Activated CD4-positive, alpha-beta T cell treated with anti-CD3 and anti-CD28 coated beads, Interleukin-2, amount 10 ng/mL, durations not matched to agents 24 days and 14 days (primary cell): ENCODE measurements at regions of chr6 and their contacts with region 1.

Region 1: GRCh38 chr6:139323511-139324300 is 31.9 kb upstream of the TXLNB start:
- DNase-seq: peak; percentile 92
- H3K4me3 Mint-ChIP-seq: peak overlapping the region; percentile 83
- H3K27ac Mint-ChIP-seq: peak overlapping the region; percentile 99
- H3K4me1 Mint-ChIP-seq: peaks cover 21% of the 10 kb centered on the region
- H3K27me3 Mint-ChIP-seq: no peaks in the 10 kb centered on the region

Region 2: GRCh38 chr6:137518386-137518983 is 1805.2 kb before region 1 on chr6:
- intact Hi-C with region 1: no loop called
- DNase-seq: peak; percentile 42
- H3K4me3 Mint-ChIP-seq: no peak overlapping the region
- H3K27ac Mint-ChIP-seq: no peak overlapping the region
- H3K4me1 Mint-ChIP-seq: peaks cover 2% of the 10 kb centered on the region
- H3K27me3 Mint-ChIP-seq: peaks cover 74% of the 10 kb centered on the region

Region 3: DNA sequence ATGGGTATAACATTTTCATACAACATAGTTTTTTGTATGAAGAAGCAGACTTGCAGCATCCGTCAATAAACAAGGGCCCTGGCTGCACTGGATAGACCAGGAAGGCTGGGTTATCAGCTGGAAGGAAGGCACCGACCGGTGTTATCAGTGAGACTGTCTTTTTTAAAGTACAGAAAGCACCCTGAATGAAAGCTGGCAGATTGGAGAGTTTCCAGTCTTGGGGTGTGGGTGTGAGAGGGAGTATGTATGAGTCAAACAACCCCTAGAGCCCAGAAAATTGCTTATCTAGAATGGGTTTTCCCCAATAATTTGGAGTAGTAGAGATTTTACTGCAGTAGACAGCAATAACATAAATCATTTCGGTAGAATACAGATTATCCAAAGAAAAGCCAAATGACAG is 74.3 kb before region 1 on chr6:
- intact Hi-C with region 1: loop called (anchors 1 kb)
- DNase-seq: peak; percentile 70
- H3K4me3 Mint-ChIP-seq: peak overlapping the region; percentile 52
- H3K27ac Mint-ChIP-seq: peak overlapping the region; percentile 91
- H3K4me1 Mint-ChIP-seq: peaks cover 46% of the 10 kb centered on the region
- H3K27me3 Mint-ChIP-seq: no peaks in the 10 kb centered on the region

Region 4: DNA sequence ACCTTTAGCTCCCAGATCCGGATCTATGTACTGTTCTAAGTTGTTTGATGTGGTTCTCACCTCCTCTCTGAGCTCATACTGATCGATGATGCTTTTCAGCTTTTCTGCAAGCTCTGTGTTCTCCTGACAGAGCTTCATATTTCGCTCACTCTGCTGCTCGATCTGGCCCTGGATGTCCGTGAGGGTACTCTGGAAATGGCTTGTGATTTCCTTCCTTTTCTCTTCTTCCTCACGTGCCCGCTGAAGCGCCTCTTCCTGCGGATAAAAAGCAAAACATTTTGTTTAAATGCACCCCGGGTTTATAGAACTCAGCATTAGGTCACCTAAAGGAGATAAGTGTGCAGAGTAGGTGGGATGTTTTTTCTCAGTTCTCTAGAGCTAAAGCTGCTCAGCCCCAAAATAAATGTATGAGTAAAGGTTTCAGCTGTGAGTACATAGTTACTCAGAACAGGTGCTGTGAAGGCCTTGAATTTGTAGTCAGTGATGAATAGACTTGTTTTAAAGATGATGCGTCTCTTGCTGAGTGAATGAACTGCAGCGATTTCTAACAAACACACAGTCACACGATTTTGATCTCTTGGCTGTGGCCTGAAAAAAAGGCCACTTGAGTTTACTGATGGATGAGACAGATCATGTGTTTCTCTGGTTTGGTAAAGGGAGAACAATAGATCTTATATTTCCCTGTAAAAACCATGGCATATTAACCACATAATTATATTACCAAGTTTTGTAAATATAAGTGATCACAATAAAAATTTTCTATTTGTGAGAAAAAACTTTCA is 61.0 kb before region 1 on chr6:
- intact Hi-C with region 1: loop called (anchors 5 kb)
- DNase-seq: peak; percentile 77
- H3K4me3 Mint-ChIP-seq: peak overlapping the region; percentile 75
- H3K27ac Mint-ChIP-seq: peak overlapping the region; percentile 90
- H3K4me1 Mint-ChIP-seq: peaks cover 21% of the 10 kb centered on the region
- H3K27me3 Mint-ChIP-seq: no peaks in the 10 kb centered on the region

Region 5: GRCh38 chr6:139278190-139278589 is 45.5 kb before region 1 on chr6:
- intact Hi-C with region 1: loop called (anchors 5 kb)
- DNase-seq: peak; percentile 45
- H3K4me3 Mint-ChIP-seq: no peak overlapping the region
- H3K27ac Mint-ChIP-seq: no peak overlapping the region
- H3K4me1 Mint-ChIP-seq: peaks cover 25% of the 10 kb centered on the region
- H3K27me3 Mint-ChIP-seq: no peaks in the 10 kb centered on the region

Region 6: GRCh38 chr6:139308286-139308916 is 15.3 kb before region 1 on chr6:
- intact Hi-C with region 1: loop called (anchors 1 kb)
- DNase-seq: peak; percentile 8
- H3K4me3 Mint-ChIP-seq: no peak overlapping the region
- H3K27ac Mint-ChIP-seq: peak overlapping the region; percentile 82
- H3K4me1 Mint-ChIP-seq: peaks cover 23% of the 10 kb centered on the region
- H3K27me3 Mint-ChIP-seq: no peaks in the 10 kb centered on the region

Region 7: GRCh38 chr6:139364302-139364981 is 40.7 kb after region 1 on chr6:
- intact Hi-C with region 1: loop called (anchors 5 kb)
- DNase-seq: peak; percentile 68
- H3K4me3 Mint-ChIP-seq: no peak overlapping the region
- H3K27ac Mint-ChIP-seq: no peak overlapping the region
- H3K4me1 Mint-ChIP-seq: peaks cover 30% of the 10 kb centered on the region
- H3K27me3 Mint-ChIP-seq: peaks cover 4% of the 10 kb centered on the region